Lower leg skin (tissue), 4 donors: ENCODE measurements at regions of chr3 and their contacts with region 1.

Region 1: DNA sequence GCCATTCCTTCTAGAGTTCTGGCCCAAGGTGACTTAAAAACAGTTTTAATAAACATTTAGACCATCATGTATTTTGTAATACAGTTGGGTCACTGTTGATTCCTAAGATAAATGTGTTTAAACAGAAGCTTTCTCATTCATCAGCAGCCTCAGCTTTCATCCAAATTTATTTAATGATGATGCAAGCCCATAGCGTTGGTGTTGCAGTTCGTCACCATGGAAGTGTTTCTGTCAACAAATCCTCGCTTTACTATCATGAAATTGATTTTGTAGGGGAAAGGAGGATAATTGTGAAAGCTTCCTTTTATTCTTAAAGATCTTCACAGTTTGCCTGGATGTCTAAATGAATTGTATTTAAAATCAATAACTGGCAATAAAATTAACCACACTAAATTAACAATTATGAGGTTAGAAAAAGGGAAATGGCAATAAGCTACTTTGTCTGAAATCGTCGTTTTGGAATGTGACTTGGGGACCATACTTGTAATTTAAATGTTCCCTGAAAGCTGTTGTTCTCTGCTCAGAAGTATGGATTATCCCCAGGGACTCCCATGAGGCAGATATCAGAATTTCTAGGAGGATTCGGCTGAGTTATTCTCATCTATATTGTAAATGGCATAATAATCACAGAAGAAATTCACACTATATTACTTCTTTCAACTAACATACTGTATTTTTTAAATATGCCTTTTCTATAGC is 28.9 kb downstream of the CMSS1 start:
- DNase-seq: peak in 1 of 2 donors; percentile 47
- H3K4me3 ChIP-seq: no peak overlapping the region
- CTCF ChIP-seq: no peak
- POLR2A ChIP-seq: no peak

Region 2: DNA sequence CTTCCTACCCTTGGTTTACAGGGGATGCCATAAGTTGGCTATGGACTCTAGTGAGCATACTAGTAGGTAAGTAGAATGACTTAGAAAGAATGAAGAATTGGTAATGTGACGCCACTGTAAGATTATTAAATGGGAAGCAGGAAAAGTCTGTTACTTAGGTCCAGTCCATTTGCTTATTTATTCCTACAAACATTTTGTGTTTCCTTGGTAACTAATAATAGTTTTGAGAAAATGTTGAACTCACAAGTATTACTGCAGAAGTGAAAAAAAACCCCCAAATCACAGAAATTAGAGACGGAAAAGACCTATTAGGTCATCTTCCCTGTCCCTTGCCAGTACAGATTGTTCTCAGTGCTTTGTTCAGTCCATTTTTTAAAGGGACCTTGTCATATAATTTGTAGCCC is 34.5 kb after region 1 on chr3:
- intact Hi-C with region 1: loop called (anchors 5 kb)
- DNase-seq: no peak
- H3K4me3 ChIP-seq: no peak overlapping the region
- CTCF ChIP-seq: no peak
- POLR2A ChIP-seq: no peak